K562 (cell line): ENCODE measurements at regions of chr19 and their contacts with region 1.

Region 1: GRCh38 chr19:40465557-40466150 is at the start of gene BLVRB:
- DNase-seq: peak; percentile 96 to 100 (median 98)
- ATAC-seq: peak; percentile 92
- H3K4me3 ChIP-seq: peak within 1 kb of the TSS; percentile 91
- H3K27ac ChIP-seq: peak within 1 kb of the TSS; percentile 96
- H3K4me1 ChIP-seq: peaks cover 23 to 57% of the 10 kb centered on the region in 2 experiments; a peak in 4 of 5 replicates
- H3K27me3 ChIP-seq: no peaks in the 10 kb centered on the region
- CTCF ChIP-seq: no peak
- EP300 ChIP-seq: no peak
- POLR2A ChIP-seq: peak; percentile 93
- RAD21 ChIP-seq: no peak
- polyA plus RNA-seq, gene BLVRB: 81.1 to 184 TPM

Region 2: GRCh38 chr19:40433391-40434216 is 32.0 kb before region 1 on chr19:
- CTCF ChIA-PET with region 1: no interaction called
- POLR2A ChIA-PET with region 1: interaction called, 10 read pairs
- in situ Hi-C with region 1: no loop called
- intact Hi-C with region 1: no loop called
- DNase-seq: peak; percentile 92 to 93 (median 93)
- ATAC-seq: peak; percentile 97
- H3K4me3 ChIP-seq: peak overlapping the region; percentile 40
- H3K27ac ChIP-seq: peak overlapping the region; percentile 94
- H3K4me1 ChIP-seq: peaks cover 12 to 41% of the 10 kb centered on the region in 2 experiments
- H3K27me3 ChIP-seq: no peaks in the 10 kb centered on the region
- CTCF ChIP-seq: no peak
- EP300 ChIP-seq: peak; percentile 35; the same call in 1 of the 2 replicates
- POLR2A ChIP-seq: peak; percentile 79
- RAD21 ChIP-seq: no peak

Region 3: GRCh38 chr19:40453151-40453735 is 12.4 kb before region 1 on chr19:
- CTCF ChIA-PET with region 1: no interaction called
- POLR2A ChIA-PET with region 1: interaction called, 43 read pairs
- in situ Hi-C with region 1: no loop called
- intact Hi-C with region 1: no loop called
- DNase-seq: no peak
- ATAC-seq: no peak
- H3K4me3 ChIP-seq: no peak overlapping the region
- H3K27ac ChIP-seq: no peak overlapping the region
- H3K4me1 ChIP-seq: peaks cover 0 to 5% of the 10 kb centered on the region in 2 experiments; a peak in 3 of 5 replicates
- H3K27me3 ChIP-seq: no peaks in the 10 kb centered on the region
- CTCF ChIP-seq: no peak
- EP300 ChIP-seq: no peak
- POLR2A ChIP-seq: no peak
- RAD21 ChIP-seq: no peak

Region 4: GRCh38 chr19:40598121-40598917 is 132.7 kb after region 1 on chr19:
- CTCF ChIA-PET with region 1: interaction called, 7 read pairs
- POLR2A ChIA-PET with region 1: interaction called, 15 read pairs
- in situ Hi-C with region 1: no loop called
- intact Hi-C with region 1: loop called (anchors 1 kb)
- DNase-seq: peak; percentile 68 to 96 (median 76)
- ATAC-seq: peak; percentile 70
- H3K4me3 ChIP-seq: peak overlapping the region; percentile 48
- H3K27ac ChIP-seq: peak overlapping the region; percentile 70; the same call in 2 of the 3 replicates
- H3K4me1 ChIP-seq: peaks cover 45 to 82% of the 10 kb centered on the region in 2 experiments
- H3K27me3 ChIP-seq: no peaks in the 10 kb centered on the region
- CTCF ChIP-seq: peak; percentile 97 to 99 (median 98)
- EP300 ChIP-seq: peak; percentile 28; the same call in 1 of the 2 replicates
- POLR2A ChIP-seq: no peak; the same call in 1 of the 2 replicates
- RAD21 ChIP-seq: peak; percentile 89 to 94

Region 5: GRCh38 chr19:40633207-40633606 is 167.6 kb after region 1 on chr19:
- CTCF ChIA-PET with region 1: interaction called, 12 read pairs
- POLR2A ChIA-PET with region 1: no interaction called
- in situ Hi-C with region 1: no loop called
- intact Hi-C with region 1: no loop called
- DNase-seq: no peak
- ATAC-seq: no peak
- H3K4me3 ChIP-seq: no peak overlapping the region
- H3K27ac ChIP-seq: no peak overlapping the region
- H3K4me1 ChIP-seq: peaks cover 5 to 14% of the 10 kb centered on the region in 2 experiments; a peak in 4 of 5 replicates
- H3K27me3 ChIP-seq: no peaks in the 10 kb centered on the region
- CTCF ChIP-seq: no peak
- EP300 ChIP-seq: no peak
- POLR2A ChIP-seq: no peak
- RAD21 ChIP-seq: no peak

Region 6: GRCh38 chr19:40646564-40647254 is 181.1 kb after region 1 on chr19:
- CTCF ChIA-PET with region 1: no interaction called
- POLR2A ChIA-PET with region 1: no interaction called
- in situ Hi-C with region 1: no loop called
- intact Hi-C with region 1: no loop called
- DNase-seq: peak in 2 of 4 experiments; percentile 3 to 5
- ATAC-seq: peak; percentile 12; the same call in 2 of the 3 replicates
- H3K4me3 ChIP-seq: no peak overlapping the region
- H3K27ac ChIP-seq: no peak overlapping the region
- H3K4me1 ChIP-seq: peaks cover 3 to 9% of the 10 kb centered on the region in 2 experiments; a peak in 3 of 5 replicates
- H3K27me3 ChIP-seq: no peaks in the 10 kb centered on the region
- CTCF ChIP-seq: no peak
- EP300 ChIP-seq: no peak
- POLR2A ChIP-seq: no peak
- RAD21 ChIP-seq: no peak